PC-3 (cell line): ENCODE measurements at regions of chr2 and their contacts with region 1.

Region 1: GRCh38 chr2:199488772-199489400 is 31.1 kb upstream of the SATB2 start:
- DNase-seq: peak; percentile 78
- ATAC-seq: peak; percentile 45; the same call in 1 of the 2 replicates
- H3K4me3 ChIP-seq: no peak overlapping the region
- H3K27ac ChIP-seq: no peak overlapping the region
- H3K4me1 ChIP-seq: no peaks in the 10 kb centered on the region
- H3K27me3 ChIP-seq: no peaks in the 10 kb centered on the region
- CTCF ChIP-seq: peak; percentile 93

Region 2: DNA sequence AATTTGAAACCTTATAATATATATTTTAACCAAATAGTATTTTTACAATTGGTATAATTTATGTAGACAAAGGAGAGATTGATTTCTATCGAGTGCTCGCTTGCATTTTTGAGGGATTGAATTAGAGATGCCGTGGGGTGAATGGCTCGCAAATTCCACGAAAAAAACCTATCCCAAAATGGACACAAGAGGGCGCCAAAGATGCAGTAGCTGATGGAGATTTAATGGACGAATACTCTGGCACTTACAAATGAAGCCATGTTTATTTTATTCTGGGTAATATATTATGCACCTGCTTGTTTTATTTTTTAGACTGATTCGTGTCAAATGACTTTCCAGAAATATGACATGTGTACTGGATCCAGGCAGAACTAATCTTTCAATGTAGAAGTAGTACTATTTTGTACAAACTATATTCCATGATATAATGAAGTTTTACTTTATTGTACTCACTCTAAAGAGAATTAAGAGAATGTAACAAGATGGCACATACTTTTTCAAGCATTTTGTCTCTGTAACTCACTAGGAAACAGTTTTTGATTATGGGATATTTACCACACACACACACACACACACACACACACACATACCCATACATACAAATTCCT is 1179.1 kb before region 1 on chr2:
- CTCF ChIA-PET with region 1: interaction called, 5 read pairs
- POLR2A ChIA-PET with region 1: no interaction called
- intact Hi-C with region 1: loop called (anchors 1 kb)
- DNase-seq: peak; percentile 74
- ATAC-seq: peak; percentile 38; the same call in 1 of the 2 replicates
- H3K4me3 ChIP-seq: no peak overlapping the region
- H3K27ac ChIP-seq: no peak overlapping the region
- H3K4me1 ChIP-seq: no peaks in the 10 kb centered on the region
- H3K27me3 ChIP-seq: peaks cover 37% of the 10 kb centered on the region
- CTCF ChIP-seq: peak; percentile 81

Region 3: GRCh38 chr2:198991431-198991830 is 497.5 kb before region 1 on chr2:
- CTCF ChIA-PET with region 1: no interaction called
- POLR2A ChIA-PET with region 1: no interaction called
- intact Hi-C with region 1: no loop called
- DNase-seq: no peak
- ATAC-seq: no peak
- H3K4me3 ChIP-seq: no peak overlapping the region
- H3K27ac ChIP-seq: no peak overlapping the region
- H3K4me1 ChIP-seq: no peaks in the 10 kb centered on the region
- H3K27me3 ChIP-seq: no peaks in the 10 kb centered on the region
- CTCF ChIP-seq: no peak

Region 4: GRCh38 chr2:199019898-199020507 is 468.9 kb before region 1 on chr2:
- CTCF ChIA-PET with region 1: interaction called, 4 read pairs
- POLR2A ChIA-PET with region 1: no interaction called
- intact Hi-C with region 1: loop called (anchors 1 kb)
- DNase-seq: peak; percentile 52
- ATAC-seq: peak; percentile 72
- H3K4me3 ChIP-seq: no peak overlapping the region
- H3K27ac ChIP-seq: no peak overlapping the region
- H3K4me1 ChIP-seq: no peaks in the 10 kb centered on the region
- H3K27me3 ChIP-seq: no peaks in the 10 kb centered on the region
- CTCF ChIP-seq: peak; percentile 58

Region 5: GRCh38 chr2:199739413-199740110 is 250.7 kb after region 1 on chr2:
- CTCF ChIA-PET with region 1: no interaction called
- POLR2A ChIA-PET with region 1: no interaction called
- intact Hi-C with region 1: loop called (anchors 5 kb)
- DNase-seq: peak; percentile 78
- ATAC-seq: peak; percentile 62
- H3K4me3 ChIP-seq: no peak overlapping the region
- H3K27ac ChIP-seq: no peak overlapping the region
- H3K4me1 ChIP-seq: peaks cover 16% of the 10 kb centered on the region
- H3K27me3 ChIP-seq: peaks cover 37% of the 10 kb centered on the region
- CTCF ChIP-seq: peak; percentile 98